Pancreas (tissue), 10 donors: ENCODE measurements at regions of chr2 and their contacts with region 1.

Region 1: DNA sequence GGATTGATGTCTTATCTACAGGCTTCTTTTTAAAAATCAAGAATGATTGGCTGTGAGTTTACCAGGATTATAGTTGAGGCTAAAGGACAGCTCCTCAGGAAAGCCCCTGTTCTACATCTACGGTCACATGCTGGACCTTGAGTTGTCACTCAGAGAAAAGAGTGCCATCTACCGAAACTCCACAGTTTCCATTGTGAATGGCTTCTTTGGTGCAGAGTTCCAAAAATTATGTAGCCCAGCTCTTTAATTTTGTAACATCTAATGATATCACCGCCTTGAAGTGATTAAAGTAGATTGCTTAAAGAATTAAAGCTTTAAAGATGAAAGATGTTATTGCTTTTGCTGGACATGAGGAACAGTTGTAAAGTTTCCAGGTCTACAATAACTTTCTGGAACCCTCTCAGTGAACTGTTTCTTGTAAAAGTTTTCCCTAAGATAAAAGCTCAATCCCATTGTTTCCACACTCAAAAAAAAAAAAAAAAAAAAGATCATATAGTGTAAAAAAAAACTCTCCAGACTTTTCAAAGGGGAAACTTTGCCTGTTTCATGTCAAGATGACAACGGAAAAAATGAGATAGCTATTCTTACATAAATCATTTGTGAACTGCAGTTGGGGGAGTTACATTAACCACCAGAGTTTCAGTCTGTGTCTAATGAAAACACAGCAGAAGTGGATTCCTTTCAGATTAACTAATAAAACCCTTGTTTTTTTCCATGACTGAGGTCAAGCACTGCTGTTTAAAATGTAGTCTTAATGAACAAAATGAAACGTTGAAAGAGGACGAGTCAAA is 4.3 kb downstream of the COL3A1 start:
- DNase-seq: peak in 1 of 6 donors; percentile 46
- ATAC-seq: peak in 3 of 4 donors; percentile 76 to 84 (median 80)
- H3K4me3 ChIP-seq: no peak overlapping the region
- H3K27ac ChIP-seq: peak overlapping the region in 2 of 4 donors; percentile 28 to 30
- H3K4me1 ChIP-seq: no peaks in the 10 kb centered on the region
- H3K27me3 ChIP-seq: no peaks in the 10 kb centered on the region
- CTCF ChIP-seq: no peak

Region 2: GRCh38 chr2:188524519-188525113 is 453.9 kb before region 1 on chr2:
- intact Hi-C with region 1: loop called in 1 of 3 experiments (anchors 5 kb)
- DNase-seq: peak in 3 of 6 donors; percentile 4 to 24 (median 11)
- ATAC-seq: peak; percentile 74 to 90 (median 84)
- H3K4me3 ChIP-seq: no peak overlapping the region
- H3K27ac ChIP-seq: no peak overlapping the region
- H3K4me1 ChIP-seq: peaks cover 0 to 6% (median 0%) of the 10 kb centered on the region in 3 donors
- H3K27me3 ChIP-seq: no peaks in the 10 kb centered on the region
- CTCF ChIP-seq: peak; percentile 25 to 69 (median 64)

Region 3: DNA sequence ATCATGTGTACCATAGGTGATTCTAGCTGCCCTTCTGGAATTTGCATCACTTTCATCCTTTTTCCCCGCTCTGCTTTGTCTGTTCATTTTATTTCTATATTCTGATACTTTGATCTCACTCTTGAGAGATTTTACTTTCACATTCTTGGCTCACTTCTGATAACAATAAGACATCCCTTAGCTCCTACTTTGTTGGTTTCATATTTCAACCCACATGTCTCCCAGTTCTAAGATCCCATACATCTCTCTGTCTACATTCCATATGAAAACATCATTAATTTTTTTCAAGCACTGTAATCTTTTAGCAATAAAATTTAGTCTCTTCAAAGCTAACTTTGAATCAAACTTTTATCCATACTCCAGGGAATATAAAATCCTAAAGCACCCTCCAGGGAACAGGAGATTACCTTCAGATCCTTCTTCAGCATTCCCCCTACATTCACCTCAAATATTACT is 71.3 kb after region 1 on chr2:
- intact Hi-C with region 1: no loop called
- DNase-seq: no peak
- ATAC-seq: no peak
- H3K4me3 ChIP-seq: no peak overlapping the region
- H3K27ac ChIP-seq: no peak overlapping the region
- H3K4me1 ChIP-seq: peaks cover 0 to 2% (median 0%) of the 10 kb centered on the region in 3 donors
- H3K27me3 ChIP-seq: no peaks in the 10 kb centered on the region
- CTCF ChIP-seq: no peak